Activated naive CD4-positive, alpha-beta T cell treated with anti-CD3 and anti-CD28 coated beads for 36 hours (primary cell): ENCODE measurements at regions of chr1 and their contacts with region 1.

Region 1: GRCh38 chr1:108828022-108828961 is 28.6 kb downstream of the AKNAD1 start:
- DNase-seq: peak; percentile 83
- H3K4me3 Mint-ChIP-seq: no peak overlapping the region
- H3K27ac Mint-ChIP-seq: no peak overlapping the region
- H3K4me1 Mint-ChIP-seq: no peaks in the 10 kb centered on the region
- H3K27me3 Mint-ChIP-seq: no peaks in the 10 kb centered on the region

Region 2: GRCh38 chr1:108106775-108107174 is 721.5 kb before region 1 on chr1:
- CTCF ChIA-PET with region 1: no interaction called
- intact Hi-C with region 1: no loop called
- DNase-seq: no peak
- H3K4me3 Mint-ChIP-seq: no peak overlapping the region
- H3K27ac Mint-ChIP-seq: no peak overlapping the region
- H3K4me1 Mint-ChIP-seq: peaks cover 15% of the 10 kb centered on the region
- H3K27me3 Mint-ChIP-seq: no peaks in the 10 kb centered on the region

Region 3: GRCh38 chr1:108670131-108670773 is 158.0 kb before region 1 on chr1:
- CTCF ChIA-PET with region 1: no interaction called
- intact Hi-C with region 1: no loop called
- DNase-seq: no peak
- H3K4me3 Mint-ChIP-seq: no peak overlapping the region
- H3K27ac Mint-ChIP-seq: no peak overlapping the region
- H3K4me1 Mint-ChIP-seq: peaks cover 11% of the 10 kb centered on the region
- H3K27me3 Mint-ChIP-seq: no peaks in the 10 kb centered on the region

Region 4: GRCh38 chr1:108847494-108847893 is 19.2 kb after region 1 on chr1:
- CTCF ChIA-PET with region 1: interaction called, 30 read pairs
- intact Hi-C with region 1: no loop called
- DNase-seq: no peak
- H3K4me3 Mint-ChIP-seq: no peak overlapping the region
- H3K27ac Mint-ChIP-seq: no peak overlapping the region
- H3K4me1 Mint-ChIP-seq: no peaks in the 10 kb centered on the region
- H3K27me3 Mint-ChIP-seq: no peaks in the 10 kb centered on the region

Region 5: DNA sequence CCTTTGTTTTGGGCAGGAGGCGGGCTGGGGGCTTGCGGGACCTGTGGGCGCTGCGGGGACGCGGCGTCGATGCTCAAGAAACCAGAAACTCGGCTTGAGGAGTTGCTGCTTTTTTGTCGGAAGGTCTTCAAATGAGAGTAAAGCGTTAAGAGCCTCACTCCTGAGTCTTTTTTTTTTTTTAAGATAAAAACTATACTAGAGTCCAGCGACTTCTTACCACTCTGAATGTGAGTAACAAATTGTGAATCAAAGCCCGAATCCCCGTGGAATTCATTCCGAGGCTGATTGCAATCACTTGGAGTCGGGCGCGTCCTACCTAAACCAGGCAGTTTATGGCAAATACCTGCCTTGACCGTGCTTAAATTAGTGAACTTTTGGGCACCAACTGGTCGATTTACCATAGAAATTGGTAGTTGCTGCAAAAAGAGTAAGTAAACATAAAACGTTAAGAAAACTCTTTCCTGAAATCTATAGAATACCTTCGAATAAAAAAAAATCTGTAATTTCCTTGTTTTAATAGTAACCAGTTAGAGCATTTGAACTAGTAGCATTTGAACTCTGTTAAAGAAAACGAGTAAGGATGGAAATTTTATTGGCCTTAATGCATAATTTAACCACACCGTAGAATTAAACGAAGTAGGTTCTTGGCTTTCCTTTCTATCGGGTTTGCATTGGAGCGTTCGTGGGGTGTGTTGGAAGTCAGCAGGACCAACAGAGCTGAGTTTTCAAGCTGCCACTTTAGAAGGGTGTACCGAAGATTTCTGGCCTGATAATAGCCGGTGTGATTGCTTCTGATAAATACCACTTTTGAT is 49.3 kb after region 1 on chr1:
- CTCF ChIA-PET with region 1: no interaction called
- intact Hi-C with region 1: loop called (anchors 1 kb)
- DNase-seq: no peak
- H3K4me3 Mint-ChIP-seq: peak overlapping the region; percentile 89
- H3K27ac Mint-ChIP-seq: no peak overlapping the region
- H3K4me1 Mint-ChIP-seq: peaks cover 4% of the 10 kb centered on the region
- H3K27me3 Mint-ChIP-seq: peaks cover 25% of the 10 kb centered on the region

Region 6: GRCh38 chr1:108897865-108898720 is 69.8 kb after region 1 on chr1:
- CTCF ChIA-PET with region 1: interaction called, 109 read pairs
- intact Hi-C with region 1: loop called (anchors 1 kb)
- DNase-seq: peak; percentile 43
- H3K4me3 Mint-ChIP-seq: no peak overlapping the region
- H3K27ac Mint-ChIP-seq: no peak overlapping the region
- H3K4me1 Mint-ChIP-seq: no peaks in the 10 kb centered on the region
- H3K27me3 Mint-ChIP-seq: peaks cover 2% of the 10 kb centered on the region

Region 7: GRCh38 chr1:109193653-109194590 is 365.6 kb after region 1 on chr1:
- CTCF ChIA-PET with region 1: no interaction called
- intact Hi-C with region 1: loop called (anchors 1 kb)
- DNase-seq: peak; percentile 73
- H3K4me3 Mint-ChIP-seq: no peak overlapping the region
- H3K27ac Mint-ChIP-seq: no peak overlapping the region
- H3K4me1 Mint-ChIP-seq: peaks cover 4% of the 10 kb centered on the region
- H3K27me3 Mint-ChIP-seq: no peaks in the 10 kb centered on the region